Activated naive CD4-positive, alpha-beta T cell treated with anti-CD3 and anti-CD28 coated beads for 36 hours (primary cell): ENCODE measurements at regions of chr6 and their contacts with region 1.

Region 1: GRCh38 chr6:30678964-30679726 is 6.3 kb upstream of the DHX16 start:
- DNase-seq: peak; percentile 95
- H3K4me3 Mint-ChIP-seq: peak overlapping the region; percentile 96
- H3K27ac Mint-ChIP-seq: peak overlapping the region; percentile 100
- H3K4me1 Mint-ChIP-seq: peaks cover 21% of the 10 kb centered on the region
- H3K27me3 Mint-ChIP-seq: no peaks in the 10 kb centered on the region

Region 2: GRCh38 chr6:30304002-30304401 is 375.1 kb before region 1 on chr6:
- CTCF ChIA-PET with region 1: no interaction called
- intact Hi-C with region 1: no loop called
- DNase-seq: no peak
- H3K4me3 Mint-ChIP-seq: no peak overlapping the region
- H3K27ac Mint-ChIP-seq: no peak overlapping the region
- H3K4me1 Mint-ChIP-seq: peaks cover 40% of the 10 kb centered on the region
- H3K27me3 Mint-ChIP-seq: no peaks in the 10 kb centered on the region

Region 3: DNA sequence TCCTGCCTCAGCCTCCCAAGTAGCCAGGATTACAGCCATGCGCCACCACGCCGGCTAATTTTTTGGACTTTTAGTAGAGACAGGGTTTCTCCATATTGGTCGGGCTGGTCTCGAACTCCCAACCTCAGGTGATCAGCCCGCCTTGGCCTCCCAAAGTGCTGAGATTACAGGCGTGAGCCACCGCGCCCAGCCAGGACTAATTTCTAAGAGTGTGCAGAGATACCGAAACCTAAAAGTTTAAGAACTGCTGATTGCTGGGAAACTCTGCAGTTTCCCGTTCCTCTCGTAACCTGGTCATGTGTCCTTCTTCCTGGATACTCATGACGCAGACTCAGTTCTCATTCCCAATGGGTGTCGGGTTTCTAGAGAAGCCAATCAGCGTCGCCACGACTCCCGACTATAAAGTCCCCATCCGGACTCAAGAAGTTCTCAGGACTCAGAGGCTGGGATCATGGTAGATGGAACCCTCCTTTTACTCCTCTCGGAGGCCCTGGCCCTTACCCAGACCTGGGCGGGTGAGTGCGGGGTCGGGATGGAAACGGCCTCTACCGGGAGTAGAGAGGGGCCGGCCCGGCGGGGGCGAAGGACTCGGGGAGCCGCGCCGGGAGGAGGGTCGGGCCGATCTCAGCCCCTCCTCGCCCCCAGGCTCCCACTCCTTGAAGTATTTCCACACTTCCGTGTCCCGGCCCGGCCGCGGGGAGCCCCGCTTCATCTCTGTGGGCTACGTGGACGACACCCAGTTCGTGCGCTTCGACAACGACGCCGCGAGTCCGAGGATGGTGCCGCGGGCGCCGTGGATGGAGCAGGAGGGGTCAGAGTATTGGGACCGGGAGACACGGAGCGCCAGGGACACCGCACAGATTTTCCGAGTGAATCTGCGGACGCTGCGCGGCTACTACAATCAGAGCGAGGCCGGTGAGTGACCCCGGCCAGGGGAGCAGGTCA is 189.8 kb before region 1 on chr6 and contains the start of gene HLA-E:
- CTCF ChIA-PET with region 1: no interaction called
- intact Hi-C with region 1: loop called (anchors 1 kb)
- DNase-seq: peak; percentile 95
- H3K4me3 Mint-ChIP-seq: peak within 1 kb of the TSS; percentile 90
- H3K27ac Mint-ChIP-seq: peak within 1 kb of the TSS; percentile 97
- H3K4me1 Mint-ChIP-seq: peaks cover 54% of the 10 kb centered on the region
- H3K27me3 Mint-ChIP-seq: no peaks in the 10 kb centered on the region
- total RNA-seq, gene HLA-E: 598 to 608 TPM

Region 4: GRCh38 chr6:30711758-30712380 is 32.7 kb after region 1 on chr6:
- CTCF ChIA-PET with region 1: interaction called, 13 read pairs
- intact Hi-C with region 1: loop called (anchors 1 kb)
- DNase-seq: no peak
- H3K4me3 Mint-ChIP-seq: no peak overlapping the region
- H3K27ac Mint-ChIP-seq: peak overlapping the region; percentile 33
- H3K4me1 Mint-ChIP-seq: peaks cover 35% of the 10 kb centered on the region
- H3K27me3 Mint-ChIP-seq: no peaks in the 10 kb centered on the region

Region 5: DNA sequence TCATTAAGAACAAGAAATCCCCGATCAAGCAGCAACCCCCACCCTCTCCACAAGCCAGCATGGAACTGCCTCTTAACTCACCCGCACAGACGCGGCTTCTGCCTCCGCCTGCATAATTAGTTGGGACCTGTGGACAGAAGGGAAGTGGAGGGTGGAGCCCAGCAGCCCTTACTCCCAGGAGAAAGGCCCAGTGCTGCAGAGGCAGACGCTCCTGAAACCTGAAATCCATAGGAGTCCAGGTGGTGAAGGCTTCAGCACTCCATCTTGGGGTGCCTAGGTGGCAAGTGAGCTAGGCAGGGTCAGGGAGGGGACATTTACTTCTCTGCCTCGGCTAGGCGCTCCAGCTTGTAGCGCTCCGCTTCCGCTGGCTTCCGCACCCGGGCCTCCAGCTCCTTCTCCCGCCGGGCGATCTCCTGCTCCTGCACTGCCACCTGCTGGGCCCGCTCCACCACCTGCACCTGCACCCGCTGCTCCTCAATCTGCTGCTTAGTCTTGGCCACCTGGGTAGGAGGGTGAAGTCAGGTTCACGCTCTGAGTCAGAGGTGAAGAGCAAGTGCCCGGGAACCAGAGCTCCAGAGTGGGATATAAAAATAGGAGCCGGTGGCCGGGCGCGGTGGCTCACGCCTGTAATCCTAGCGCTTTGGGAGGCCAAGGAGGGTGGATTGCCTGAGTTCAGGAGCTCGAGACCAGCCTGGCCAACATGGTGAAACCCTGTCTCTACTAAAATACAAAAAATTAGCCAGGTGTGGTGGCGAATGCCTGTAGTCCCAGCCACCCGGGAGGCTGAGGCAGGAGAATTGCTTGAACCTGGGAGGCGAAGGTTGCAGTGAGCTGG is 51.7 kb after region 1 on chr6:
- CTCF ChIA-PET with region 1: interaction called, 346 read pairs
- intact Hi-C with region 1: loop called (anchors 1 kb)
- DNase-seq: peak; percentile 94
- H3K4me3 Mint-ChIP-seq: peak overlapping the region; percentile 29
- H3K27ac Mint-ChIP-seq: no peak overlapping the region
- H3K4me1 Mint-ChIP-seq: peaks cover 47% of the 10 kb centered on the region
- H3K27me3 Mint-ChIP-seq: no peaks in the 10 kb centered on the region

Region 6: DNA sequence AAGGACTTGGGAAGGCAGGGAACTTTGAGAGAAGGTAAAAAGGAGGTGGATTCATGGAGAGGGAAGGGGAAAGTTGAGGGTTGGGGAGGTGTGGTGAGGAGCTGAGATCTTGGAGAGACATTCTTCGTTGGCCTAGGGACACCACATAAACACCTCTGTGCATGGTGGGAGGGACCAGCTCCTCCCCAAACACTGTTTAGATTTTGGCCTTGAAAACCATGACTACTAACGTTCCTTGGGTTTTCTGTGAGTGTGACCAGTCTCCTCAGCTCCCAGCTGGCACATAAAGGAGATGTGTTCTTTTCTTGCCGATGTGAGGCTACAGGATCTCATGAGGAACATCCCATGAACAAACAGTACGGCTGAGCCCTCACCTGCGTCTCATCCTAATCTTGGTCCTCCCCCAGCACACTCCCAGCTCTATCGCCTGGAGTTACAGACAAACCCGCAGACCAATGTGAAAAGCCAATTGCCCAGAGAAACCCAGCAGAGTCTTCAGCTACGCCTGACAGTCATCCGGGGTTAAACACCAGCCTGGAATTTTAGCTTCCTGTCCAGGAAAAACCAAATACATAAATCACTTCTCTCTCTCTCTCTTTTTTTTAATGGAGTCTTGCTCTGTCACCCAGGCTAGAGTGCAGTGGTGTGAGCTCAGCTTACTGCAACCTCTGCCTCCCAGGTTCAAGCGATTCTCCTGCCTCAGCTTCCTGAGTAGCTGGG is 183.2 kb after region 1 on chr6:
- CTCF ChIA-PET with region 1: no interaction called
- intact Hi-C with region 1: no loop called
- DNase-seq: no peak
- H3K4me3 Mint-ChIP-seq: no peak overlapping the region
- H3K27ac Mint-ChIP-seq: no peak overlapping the region
- H3K4me1 Mint-ChIP-seq: peaks cover 11% of the 10 kb centered on the region
- H3K27me3 Mint-ChIP-seq: no peaks in the 10 kb centered on the region

Region 7: DNA sequence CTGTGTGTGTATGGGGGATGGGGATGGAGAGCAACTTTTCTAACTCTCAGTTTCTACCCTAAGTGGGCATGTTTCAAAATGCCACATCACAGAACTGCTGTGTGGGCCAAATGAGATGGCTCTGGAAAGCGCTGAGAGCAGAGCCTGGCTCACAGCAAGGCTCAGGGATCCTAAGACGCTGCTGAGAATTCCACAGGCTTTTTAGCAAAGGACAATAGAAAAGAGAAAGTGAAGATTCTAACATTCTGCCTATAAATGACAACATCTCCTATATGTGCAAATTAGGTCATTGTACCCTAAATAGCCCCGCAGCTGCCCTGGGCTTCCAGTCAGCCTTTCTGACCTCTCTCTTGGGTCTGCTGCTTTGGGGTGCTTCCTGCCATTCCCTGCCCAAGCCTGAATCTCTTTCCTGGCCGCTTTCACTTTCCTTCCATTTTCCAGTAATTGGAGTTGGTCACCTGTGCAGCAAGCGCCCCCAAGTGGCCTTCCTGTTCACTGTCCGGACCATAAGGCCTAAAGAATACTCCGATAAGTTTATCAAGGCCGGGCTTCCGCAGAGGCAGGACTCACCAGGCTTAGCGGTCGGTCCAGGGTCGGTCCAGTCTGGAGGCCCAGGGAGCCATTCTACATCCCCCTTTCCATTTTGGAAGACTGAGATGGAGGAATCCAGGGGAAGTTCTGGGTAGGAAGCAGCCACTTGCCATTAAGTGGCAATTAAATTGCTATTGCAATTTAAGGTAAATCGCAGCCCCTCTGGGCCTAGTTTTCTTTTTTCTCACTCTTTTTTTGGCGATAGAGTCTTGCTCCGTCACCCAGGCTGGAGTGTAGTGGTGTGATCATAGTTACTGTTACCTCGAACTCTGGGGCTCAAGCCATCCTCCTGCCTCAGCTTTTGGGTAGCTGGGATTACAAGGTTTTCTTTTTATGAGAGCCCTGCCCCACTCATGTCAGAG is 198.6 kb after region 1 on chr6:
- CTCF ChIA-PET with region 1: interaction called, 4 read pairs
- intact Hi-C with region 1: loop called (anchors 1 kb)
- DNase-seq: peak; percentile 89
- H3K4me3 Mint-ChIP-seq: peak overlapping the region; percentile 68
- H3K27ac Mint-ChIP-seq: peak overlapping the region; percentile 84
- H3K4me1 Mint-ChIP-seq: peaks cover 23% of the 10 kb centered on the region
- H3K27me3 Mint-ChIP-seq: no peaks in the 10 kb centered on the region

Region 8: GRCh38 chr6:30914076-30914853 is 235.1 kb after region 1 on chr6 and contains the start of gene VARS2:
- CTCF ChIA-PET with region 1: no interaction called
- intact Hi-C with region 1: loop called (anchors 1 kb)
- DNase-seq: peak; percentile 90
- H3K4me3 Mint-ChIP-seq: peak within 1 kb of the TSS; percentile 87
- H3K27ac Mint-ChIP-seq: peak within 1 kb of the TSS; percentile 86
- H3K4me1 Mint-ChIP-seq: peaks cover 28% of the 10 kb centered on the region
- H3K27me3 Mint-ChIP-seq: no peaks in the 10 kb centered on the region
- total RNA-seq, gene VARS2: 78.1 to 82.8 TPM